Activated CD4-positive, alpha-beta T cell treated with anti-CD3 and anti-CD28 coated beads, Interleukin-2, amount 10 ng/mL, durations not matched to agents 7 days and 5 days (primary cell): ENCODE measurements at regions of chr11 and their contacts with region 1.

Region 1: GRCh38 chr11:65340226-65340625 is 6.6 kb downstream of the DPF2 start:
- DNase-seq: no peak
- H3K4me3 Mint-ChIP-seq: no peak overlapping the region
- H3K27ac Mint-ChIP-seq: no peak overlapping the region
- H3K4me1 Mint-ChIP-seq: peaks cover 22% of the 10 kb centered on the region
- H3K27me3 Mint-ChIP-seq: no peaks in the 10 kb centered on the region

Region 2: DNA sequence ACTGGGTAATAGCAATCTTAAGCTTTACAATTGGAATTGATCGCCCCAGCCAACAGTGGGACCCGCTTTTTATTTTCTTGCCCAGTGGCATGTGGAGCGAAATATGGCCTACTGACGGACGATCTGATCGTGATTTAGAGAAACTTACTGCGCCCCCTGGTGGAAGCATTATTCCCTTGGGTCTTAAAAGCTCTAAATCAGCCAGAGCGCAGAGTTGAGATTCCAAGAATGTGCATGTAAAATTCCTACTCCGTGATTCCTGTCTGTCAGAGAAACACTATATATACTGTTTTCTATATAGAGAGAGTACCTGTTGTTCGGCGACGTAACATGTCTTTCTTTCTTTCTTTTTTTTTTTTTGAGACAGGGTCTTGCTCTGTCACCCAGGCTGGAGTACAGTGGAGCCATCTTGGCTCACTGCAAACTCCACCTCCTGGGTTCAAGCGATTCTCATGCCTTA is 10.3 kb before region 1 on chr11:
- CTCF ChIA-PET with region 1: interaction called, 10 read pairs
- POLR2A ChIA-PET with region 1: no interaction called
- DNase-seq: peak; percentile 90
- H3K4me3 Mint-ChIP-seq: no peak overlapping the region
- H3K27ac Mint-ChIP-seq: no peak overlapping the region
- H3K4me1 Mint-ChIP-seq: peaks cover 17% of the 10 kb centered on the region
- H3K27me3 Mint-ChIP-seq: no peaks in the 10 kb centered on the region

Region 3: GRCh38 chr11:65418711-65419459 is 78.7 kb after region 1 on chr11:
- CTCF ChIA-PET with region 1: no interaction called
- POLR2A ChIA-PET with region 1: no interaction called
- DNase-seq: peak; percentile 92
- H3K4me3 Mint-ChIP-seq: peak overlapping the region; percentile 91
- H3K27ac Mint-ChIP-seq: peak overlapping the region; percentile 97
- H3K4me1 Mint-ChIP-seq: peaks cover 55% of the 10 kb centered on the region
- H3K27me3 Mint-ChIP-seq: peaks cover 5% of the 10 kb centered on the region